Caco-2 (cell line): ENCODE measurements at regions of chr6 and their contacts with region 1.

Region 1: DNA sequence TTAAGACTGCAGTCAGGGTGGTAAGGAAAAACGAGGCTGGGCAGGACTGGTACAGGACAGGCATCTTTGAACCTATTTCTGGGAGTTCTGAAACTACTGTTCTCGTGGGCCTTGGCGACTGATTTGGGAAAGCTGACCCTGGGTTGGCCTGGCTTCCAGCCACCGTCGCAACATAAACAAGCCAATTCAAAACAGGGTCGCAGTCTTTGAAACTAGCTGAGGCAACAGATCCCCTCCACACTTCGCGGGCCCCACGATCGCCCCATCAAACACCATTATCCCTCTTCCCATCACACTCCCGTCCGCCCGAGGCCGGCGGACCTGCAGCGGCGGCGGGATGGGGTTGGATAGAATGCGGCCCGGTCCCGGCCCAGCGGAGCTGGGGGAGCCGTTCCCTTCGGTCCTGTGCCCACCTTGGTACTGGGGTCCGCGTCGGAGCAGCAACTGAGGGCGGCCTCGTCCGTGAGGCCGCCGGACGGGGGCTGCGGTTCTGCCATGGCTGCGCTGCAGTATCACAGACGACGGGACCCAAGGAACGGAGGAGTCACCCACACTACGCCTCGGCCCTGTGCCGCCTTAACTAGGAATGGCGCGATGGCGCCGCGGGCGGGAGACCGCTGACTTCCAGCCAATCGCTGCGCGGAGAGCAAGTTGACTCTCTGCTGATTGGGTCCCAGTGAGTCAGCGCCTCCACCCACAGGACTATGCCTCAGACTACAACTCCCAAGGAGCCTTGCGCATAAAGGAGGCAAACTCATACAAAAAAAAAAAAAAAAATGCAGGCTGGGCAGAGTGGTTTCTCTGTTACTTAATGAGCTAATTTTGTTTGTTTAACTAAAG is at the start of gene GLO1:
- DNase-seq: peak; percentile 96 to 97
- H3K4me3 ChIP-seq: peak within 1 kb of the TSS; percentile 63
- H3K4me3 Mint-ChIP-seq: peak within 1 kb of the TSS; percentile 98
- H3K27ac Mint-ChIP-seq: peak within 1 kb of the TSS; percentile 91
- H3K4me1 ChIP-seq: 0 out of 2 replicates have a peak, but pooled peaks cover 4% of the 10 kb centered on the region
- H3K4me1 Mint-ChIP-seq: peaks cover 17% of the 10 kb centered on the region
- H3K27me3 ChIP-seq: no peaks in the 10 kb centered on the region
- H3K27me3 Mint-ChIP-seq: no peaks in the 10 kb centered on the region
- CTCF ChIP-seq: no peak
- total RNA-seq, gene GLO1: 146 and 155 TPM in 2 replicates

Region 2: GRCh38 chr6:37507690-37508421 is 1194.9 kb before region 1 on chr6:
- CTCF ChIA-PET with region 1: no interaction called
- POLR2A ChIA-PET with region 1: interaction called, 11 read pairs
- intact Hi-C with region 1: no loop called
- DNase-seq: peak; percentile 65 to 77
- H3K4me3 ChIP-seq: peak overlapping the region; percentile 21
- H3K4me3 Mint-ChIP-seq: peak overlapping the region; percentile 48
- H3K27ac Mint-ChIP-seq: peak overlapping the region; percentile 53
- H3K4me1 ChIP-seq: peaks cover 53% of the 10 kb centered on the region
- H3K4me1 Mint-ChIP-seq: peaks cover 35% of the 10 kb centered on the region
- H3K27me3 ChIP-seq: no peaks in the 10 kb centered on the region
- H3K27me3 Mint-ChIP-seq: no peaks in the 10 kb centered on the region
- CTCF ChIP-seq: no peak

Region 3: GRCh38 chr6:38346291-38347079 is 356.3 kb before region 1 on chr6:
- CTCF ChIA-PET with region 1: no interaction called
- POLR2A ChIA-PET with region 1: interaction called, 10 read pairs
- intact Hi-C with region 1: no loop called
- DNase-seq: no peak
- H3K4me3 ChIP-seq: no peak overlapping the region
- H3K4me3 Mint-ChIP-seq: no peak overlapping the region
- H3K27ac Mint-ChIP-seq: no peak overlapping the region
- H3K4me1 ChIP-seq: no peaks in the 10 kb centered on the region
- H3K4me1 Mint-ChIP-seq: no peaks in the 10 kb centered on the region
- H3K27me3 ChIP-seq: no peaks in the 10 kb centered on the region
- H3K27me3 Mint-ChIP-seq: no peaks in the 10 kb centered on the region
- CTCF ChIP-seq: no peak

Region 4: DNA sequence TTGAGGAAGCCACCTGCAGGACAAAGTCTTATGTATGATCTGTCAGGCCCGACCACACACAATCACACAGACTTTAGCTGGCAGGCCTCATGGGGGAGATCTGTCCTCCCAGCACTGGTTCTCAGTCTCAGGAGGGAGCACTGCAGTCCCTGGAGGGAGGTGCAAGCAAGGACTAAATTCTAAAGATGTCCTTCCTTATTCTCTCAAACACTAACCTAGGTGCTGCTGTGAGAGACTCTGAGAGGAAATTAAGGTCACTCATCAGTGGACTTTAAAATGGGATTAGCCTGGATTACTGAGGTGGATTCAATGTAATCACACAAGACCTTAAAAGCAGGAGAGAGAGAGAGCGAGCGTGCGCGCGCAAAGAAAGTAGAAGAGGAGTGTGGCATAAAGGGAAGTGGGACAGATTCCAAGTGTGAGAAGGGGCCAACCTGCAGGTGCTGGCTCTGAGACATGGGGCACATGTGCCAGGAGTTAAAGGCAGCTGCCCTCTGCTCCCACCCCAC is 14.1 kb before region 1 on chr6:
- CTCF ChIA-PET with region 1: interaction called, 3 read pairs
- POLR2A ChIA-PET with region 1: interaction called, 17 read pairs
- intact Hi-C with region 1: no loop called
- DNase-seq: peak in 1 of 2 experiments; percentile 30
- H3K4me3 ChIP-seq: no peak overlapping the region
- H3K4me3 Mint-ChIP-seq: no peak overlapping the region
- H3K27ac Mint-ChIP-seq: no peak overlapping the region
- H3K4me1 ChIP-seq: no peaks in the 10 kb centered on the region
- H3K4me1 Mint-ChIP-seq: peaks cover 13% of the 10 kb centered on the region
- H3K27me3 ChIP-seq: no peaks in the 10 kb centered on the region
- H3K27me3 Mint-ChIP-seq: no peaks in the 10 kb centered on the region
- CTCF ChIP-seq: no peak

Region 5: DNA sequence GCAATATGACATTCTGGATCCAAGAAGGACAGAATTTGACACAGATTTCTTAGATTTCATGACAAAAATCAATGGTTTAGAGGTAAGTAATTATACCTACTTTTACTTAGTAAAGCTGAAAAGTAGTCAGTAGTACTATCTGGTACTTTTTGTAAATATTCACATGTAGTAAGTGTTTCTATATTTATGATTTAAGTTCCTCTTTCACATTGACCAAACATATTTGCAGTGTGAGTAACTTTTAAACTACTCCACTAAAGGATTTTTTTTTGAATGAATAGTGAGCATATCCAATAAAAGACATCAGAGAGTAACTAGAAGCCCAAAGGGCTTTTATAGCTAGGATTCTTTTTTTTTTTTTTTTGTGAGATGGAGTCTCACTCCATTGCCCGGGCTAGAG is 73.1 kb after region 1 on chr6:
- CTCF ChIA-PET with region 1: no interaction called
- POLR2A ChIA-PET with region 1: interaction called, 11 read pairs
- intact Hi-C with region 1: no loop called
- DNase-seq: no peak
- H3K4me3 ChIP-seq: no peak overlapping the region
- H3K4me3 Mint-ChIP-seq: no peak overlapping the region
- H3K27ac Mint-ChIP-seq: no peak overlapping the region
- H3K4me1 ChIP-seq: no peaks in the 10 kb centered on the region
- H3K4me1 Mint-ChIP-seq: no peaks in the 10 kb centered on the region
- H3K27me3 ChIP-seq: no peaks in the 10 kb centered on the region
- H3K27me3 Mint-ChIP-seq: peaks cover 3% of the 10 kb centered on the region
- CTCF ChIP-seq: no peak

Region 6: DNA sequence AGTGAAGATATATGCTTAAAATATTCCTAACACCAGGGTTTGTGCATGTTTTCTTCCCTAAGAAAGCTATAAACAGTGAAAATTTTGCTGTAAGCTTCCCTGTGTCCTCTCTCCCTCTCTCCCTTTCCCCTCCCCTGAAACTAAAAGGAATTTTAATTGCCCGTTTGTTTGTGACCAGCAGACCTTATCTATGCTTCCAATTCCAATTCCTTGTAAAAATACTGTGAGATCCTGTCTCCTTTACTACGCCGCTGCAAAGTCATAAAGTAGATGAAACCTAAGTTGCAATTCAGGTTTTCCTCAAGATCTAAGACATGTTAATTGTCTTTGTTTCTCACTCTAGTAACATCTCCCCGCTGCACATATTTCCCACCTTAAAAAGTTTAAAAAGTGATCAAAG is 94.6 kb after region 1 on chr6:
- CTCF ChIA-PET with region 1: interaction called, 3 read pairs
- POLR2A ChIA-PET with region 1: interaction called, 6 read pairs
- intact Hi-C with region 1: loop called (anchors 5 kb)
- DNase-seq: peak in 1 of 2 experiments; percentile 53
- H3K4me3 ChIP-seq: no peak overlapping the region
- H3K4me3 Mint-ChIP-seq: peak overlapping the region; percentile 69
- H3K27ac Mint-ChIP-seq: peak overlapping the region; percentile 93
- H3K4me1 ChIP-seq: peaks cover 34% of the 10 kb centered on the region
- H3K4me1 Mint-ChIP-seq: peaks cover 45% of the 10 kb centered on the region
- H3K27me3 ChIP-seq: no peaks in the 10 kb centered on the region
- H3K27me3 Mint-ChIP-seq: no peaks in the 10 kb centered on the region
- CTCF ChIP-seq: no peak